A549 (cell line): ENCODE measurements at regions of chr1 and their contacts with region 1.

Region 1: GRCh38 chr1:211578640-211579433 is at the start of gene SLC30A1:
- DNase-seq: peak; percentile 99
- ATAC-seq: peak; percentile 77 to 92
- H3K4me3 ChIP-seq: peak within 1 kb of the TSS; percentile 91
- H3K27ac ChIP-seq: peak within 1 kb of the TSS; percentile 95 to 96
- H3K4me1 ChIP-seq: peaks cover 33% of the 10 kb centered on the region
- CTCF ChIP-seq: no peak
- EP300 ChIP-seq: no peak
- POLR2A ChIP-seq: peak; percentile 88
- RAD21 ChIP-seq: no peak
- polyA plus RNA-seq, gene SLC30A1: 18.4 and 20.6 TPM in 2 replicates

Region 2: DNA sequence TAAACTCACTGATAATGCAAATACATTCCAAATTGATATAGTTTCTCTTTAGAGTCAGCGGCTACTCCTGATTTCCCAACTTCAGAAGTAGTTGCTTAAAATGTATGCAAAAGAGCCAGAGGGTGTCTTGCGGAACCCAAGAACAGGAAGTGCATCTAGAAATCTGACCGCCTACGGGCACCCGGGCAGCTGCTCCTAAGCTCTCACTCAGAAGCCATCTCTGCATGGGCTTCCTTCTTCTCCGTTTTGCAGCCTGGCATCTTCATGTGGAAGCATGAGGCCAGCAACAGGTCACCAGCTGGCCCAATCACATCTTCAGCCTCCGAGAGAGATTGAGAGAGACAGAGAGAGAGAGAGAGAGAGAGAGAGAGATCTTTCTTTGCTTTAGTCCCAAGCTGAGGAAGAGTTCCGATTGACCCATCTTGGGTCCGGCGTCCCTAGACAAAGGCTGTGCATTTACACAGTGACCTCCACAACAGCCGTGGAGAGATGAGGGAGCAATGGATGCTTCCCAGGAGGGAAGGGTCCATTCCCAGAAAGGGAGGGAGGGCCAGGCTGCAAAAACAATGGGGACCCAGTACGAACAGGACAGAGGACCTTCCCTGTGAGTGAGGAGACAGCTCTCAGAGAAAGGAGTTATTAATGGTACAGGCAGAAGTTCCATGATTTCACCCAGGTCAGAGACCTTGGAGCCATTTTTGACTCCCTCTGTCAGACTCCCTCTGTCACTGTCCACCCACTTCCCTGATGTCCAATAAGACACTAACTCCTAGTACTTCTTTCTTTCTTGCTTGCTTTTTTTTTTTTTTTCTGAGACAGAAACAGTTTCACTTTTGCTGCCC is 28.3 kb after region 1 on chr1:
- CTCF ChIA-PET with region 1: interaction called, 3 read pairs
- POLR2A ChIA-PET with region 1: interaction called, 11 read pairs
- DNase-seq: no peak
- ATAC-seq: no peak
- H3K4me3 ChIP-seq: no peak overlapping the region
- H3K27ac ChIP-seq: no peak overlapping the region
- H3K4me1 ChIP-seq: peaks cover 30% of the 10 kb centered on the region
- CTCF ChIP-seq: no peak
- EP300 ChIP-seq: no peak
- POLR2A ChIP-seq: no peak
- RAD21 ChIP-seq: no peak

Region 3: GRCh38 chr1:211643324-211644212 is 64.7 kb after region 1 on chr1:
- CTCF ChIA-PET with region 1: interaction called, 14 read pairs
- POLR2A ChIA-PET with region 1: interaction called, 14 read pairs
- DNase-seq: peak in 1 of 2 experiments; percentile 39
- ATAC-seq: peak; percentile 58 to 70; a peak in 5 of 6 replicates
- H3K4me3 ChIP-seq: 0 out of 3 replicates have a peak overlapping the region, but pooled peaks have one; percentile 2
- H3K27ac ChIP-seq: peak overlapping the region; percentile 60 to 83
- H3K4me1 ChIP-seq: peaks cover 70% of the 10 kb centered on the region
- CTCF ChIP-seq: no peak
- EP300 ChIP-seq: no peak
- POLR2A ChIP-seq: no peak
- RAD21 ChIP-seq: no peak

Region 4: DNA sequence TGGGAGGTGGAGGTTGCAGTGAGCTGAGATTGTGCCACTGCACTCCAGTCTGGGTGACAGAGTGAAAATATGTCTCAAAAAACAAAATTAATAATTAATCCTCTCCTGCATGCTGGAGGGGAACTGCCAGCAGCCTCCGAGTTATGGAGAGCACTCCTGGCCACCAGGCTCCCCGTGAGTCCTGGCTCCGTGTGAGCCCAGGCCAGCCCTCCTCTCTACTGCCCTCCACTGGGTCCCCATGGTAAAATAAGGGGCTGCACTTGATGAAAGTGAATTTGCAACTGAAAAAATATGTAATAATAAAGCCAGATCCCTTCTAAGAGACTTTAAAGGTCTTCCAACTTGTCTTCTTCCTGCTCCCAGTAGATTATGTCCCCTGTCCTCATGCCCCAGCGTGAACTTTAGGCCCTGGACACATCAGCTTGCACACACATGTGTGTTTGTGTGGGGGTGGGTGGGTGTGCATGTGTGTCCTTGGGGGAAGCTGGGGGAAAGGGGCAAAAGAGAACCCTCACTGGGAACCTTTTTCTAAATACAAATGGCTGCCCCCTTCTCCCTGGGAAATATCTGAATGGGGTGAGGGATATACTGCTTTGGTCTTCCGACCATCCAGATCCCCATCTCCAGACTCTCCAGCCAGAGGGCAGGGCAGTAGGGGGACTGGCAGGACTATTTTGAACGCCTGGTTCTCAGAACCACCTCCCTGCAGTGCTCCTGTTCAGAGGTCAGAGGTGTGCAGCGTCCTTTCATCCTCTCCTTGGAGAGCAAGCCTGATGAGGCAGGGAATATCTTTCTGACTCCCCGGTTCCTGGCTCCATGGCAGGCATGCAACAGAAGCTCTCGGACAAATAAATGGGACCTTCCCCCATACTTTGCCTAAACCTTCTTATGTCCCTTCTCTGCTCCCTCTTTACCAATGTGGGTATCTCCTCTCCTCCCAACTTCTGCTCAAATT is 70.4 kb after region 1 on chr1:
- CTCF ChIA-PET with region 1: interaction called, 32 read pairs
- POLR2A ChIA-PET with region 1: interaction called, 18 read pairs
- DNase-seq: peak; percentile 55 to 68
- ATAC-seq: peak; percentile 65 to 88; a peak in 4 of 6 replicates
- H3K4me3 ChIP-seq: no peak overlapping the region
- H3K27ac ChIP-seq: peak overlapping the region; percentile 54 to 81
- H3K4me1 ChIP-seq: peaks cover 71% of the 10 kb centered on the region
- CTCF ChIP-seq: peak; percentile 47
- EP300 ChIP-seq: no peak
- POLR2A ChIP-seq: no peak
- RAD21 ChIP-seq: peak; percentile 48 to 61

Region 5: GRCh38 chr1:211667065-211667617 is 88.3 kb after region 1 on chr1:
- CTCF ChIA-PET with region 1: no interaction called
- POLR2A ChIA-PET with region 1: no interaction called
- DNase-seq: no peak
- ATAC-seq: no peak
- H3K4me3 ChIP-seq: no peak overlapping the region
- H3K27ac ChIP-seq: no peak overlapping the region
- H3K4me1 ChIP-seq: no peaks in the 10 kb centered on the region
- CTCF ChIP-seq: no peak
- EP300 ChIP-seq: no peak
- POLR2A ChIP-seq: no peak
- RAD21 ChIP-seq: no peak